Activated CD4-positive, alpha-beta memory T cell treated with anti-CD3 and anti-CD28 coated beads, Interleukin-2, amount 10 ng/mL, durations not matched to agents 7 days and 5 days (primary cell): ENCODE measurements at regions of chrX and their contacts with region 1.

Region 1: GRCh38 chrX:71622576-71623450 is 4.5 kb upstream of the CXCR3 start:
- DNase-seq: peak; percentile 78
- H3K4me3 Mint-ChIP-seq: peak overlapping the region; percentile 56
- H3K27ac Mint-ChIP-seq: peak overlapping the region; percentile 90
- H3K4me1 Mint-ChIP-seq: peaks cover 65% of the 10 kb centered on the region
- H3K27me3 Mint-ChIP-seq: no peaks in the 10 kb centered on the region

Region 2: DNA sequence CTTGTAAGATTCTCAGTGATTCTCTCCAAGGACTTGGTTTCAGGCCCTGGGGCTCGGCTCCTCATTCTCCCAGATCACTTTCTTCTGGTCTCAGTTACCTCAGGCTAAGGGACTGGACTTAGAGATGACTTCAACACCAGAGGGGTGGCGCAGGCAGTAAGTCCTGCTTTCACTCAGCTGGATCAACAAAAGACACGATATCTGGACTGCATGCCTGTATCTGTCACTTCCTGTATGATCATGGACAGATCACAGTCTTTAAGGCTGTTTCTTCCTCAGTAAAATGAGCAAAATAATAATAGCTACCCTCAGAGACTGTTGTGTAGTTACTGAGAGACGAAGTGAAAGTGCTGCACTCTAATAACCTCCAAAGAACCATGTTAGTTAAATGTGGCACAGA is 15.0 kb after region 1 on chrX:
- CTCF ChIA-PET with region 1: interaction called, 10 read pairs
- POLR2A ChIA-PET with region 1: interaction called, 16 read pairs
- DNase-seq: no peak
- H3K4me3 Mint-ChIP-seq: no peak overlapping the region
- H3K27ac Mint-ChIP-seq: no peak overlapping the region
- H3K4me1 Mint-ChIP-seq: peaks cover 13% of the 10 kb centered on the region
- H3K27me3 Mint-ChIP-seq: no peaks in the 10 kb centered on the region